ENCODE measurements at regions of chr14 and their contacts with region 1.

Region 1: GRCh38 chr14:105050551-105050897 is 14.7 kb downstream of the GPR132 start:
- DNase-seq: no peak
- H3K4me3 ChIP-seq: no peak overlapping the region
- CTCF ChIP-seq: no peak

Region 2: GRCh38 chr14:104826189-104826860 is 224.2 kb before region 1 on chr14:
- in situ Hi-C with region 1: loop called (anchors 10 kb)
- DNase-seq: no peak
- H3K4me3 ChIP-seq: peak overlapping the region; percentile 56
- CTCF ChIP-seq: peak; percentile 62

Region 3: DNA sequence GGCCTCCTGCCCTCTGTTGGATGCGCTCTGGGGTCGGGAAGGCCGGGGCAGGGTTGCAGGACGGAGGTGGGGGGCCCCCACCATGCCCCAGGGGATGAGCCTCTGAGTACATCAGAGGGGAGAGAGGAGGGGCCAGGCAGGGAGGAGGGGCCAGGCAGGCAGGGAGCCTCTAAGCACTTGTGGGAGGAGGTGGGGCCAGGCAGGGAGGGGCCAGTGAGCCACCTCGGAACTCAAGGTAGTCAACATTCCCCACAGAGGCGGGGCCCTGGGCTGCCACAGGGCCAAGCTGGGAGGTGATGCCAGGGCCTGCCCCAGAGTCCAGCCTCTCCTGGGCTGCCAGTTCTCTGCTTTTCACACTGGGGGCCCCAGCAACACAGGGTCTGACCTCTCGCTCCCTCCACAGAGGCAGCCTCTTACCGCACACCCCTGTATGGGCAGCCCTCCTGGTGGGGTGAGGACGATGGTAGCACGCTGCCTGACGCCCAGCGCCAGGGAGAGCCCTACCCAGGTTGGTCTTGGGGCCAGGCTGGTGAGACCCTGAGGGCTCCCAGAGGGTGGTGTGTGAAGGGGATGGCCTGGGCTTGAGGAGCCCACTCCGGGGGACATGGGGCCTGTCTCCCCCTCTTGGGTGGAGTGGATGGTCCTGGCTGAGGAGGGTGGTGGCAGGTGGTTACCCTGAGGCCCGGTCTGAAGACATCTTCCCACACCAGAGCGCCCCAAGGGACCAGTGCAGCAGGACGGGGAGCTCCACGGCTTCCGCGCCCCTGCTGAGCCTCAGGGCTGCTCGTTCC is 168.0 kb before region 1 on chr14:
- in situ Hi-C with region 1: loop called (anchors 10 kb)
- DNase-seq: no peak
- H3K4me3 ChIP-seq: no peak overlapping the region
- CTCF ChIP-seq: no peak

Region 4: GRCh38 chr14:104976198-104977007 is 74.1 kb before region 1 on chr14:
- in situ Hi-C with region 1: no loop called
- DNase-seq: no peak
- H3K4me3 ChIP-seq: no peak overlapping the region
- CTCF ChIP-seq: peak; percentile 79

Measured in astrocyte of the cerebellum (primary cell).